ENCODE measurements at regions of chr5 and their contacts with region 1.

Region 1: DNA sequence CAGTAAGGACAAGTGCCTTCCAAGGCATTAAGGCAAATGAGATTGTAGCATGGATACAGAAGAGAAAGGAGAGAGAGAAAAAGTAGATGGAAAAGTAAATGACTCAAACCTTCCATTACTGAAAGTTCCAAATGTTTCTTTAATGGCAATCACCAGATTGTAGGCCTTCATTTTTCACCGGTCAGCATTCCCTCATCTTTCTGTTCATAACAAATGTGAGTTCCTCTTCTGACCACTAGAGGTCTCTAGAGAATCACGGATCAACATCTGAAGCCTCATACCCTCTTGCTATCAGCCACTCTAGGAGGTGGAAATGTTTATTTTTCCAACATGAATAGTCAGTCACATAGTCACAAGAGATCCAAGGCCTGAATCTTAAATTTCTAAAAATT is 73.6 kb upstream of the RPS23 start:
- DNase-seq: peak in 1 of 2 donors; percentile 91
- H3K4me3 ChIP-seq: no peak overlapping the region
- H3K27ac ChIP-seq: no peak overlapping the region
- H3K4me1 ChIP-seq: peaks cover 0 to 14% (median 4%) of the 10 kb centered on the region in 4 donors
- H3K27me3 ChIP-seq: no peaks in the 10 kb centered on the region
- CTCF ChIP-seq: peak in 5 of 7 experiments; percentile 69 to 87 (median 76)
- EP300 ChIP-seq: no peak
- POLR2A ChIP-seq: no peak

Region 2: DNA sequence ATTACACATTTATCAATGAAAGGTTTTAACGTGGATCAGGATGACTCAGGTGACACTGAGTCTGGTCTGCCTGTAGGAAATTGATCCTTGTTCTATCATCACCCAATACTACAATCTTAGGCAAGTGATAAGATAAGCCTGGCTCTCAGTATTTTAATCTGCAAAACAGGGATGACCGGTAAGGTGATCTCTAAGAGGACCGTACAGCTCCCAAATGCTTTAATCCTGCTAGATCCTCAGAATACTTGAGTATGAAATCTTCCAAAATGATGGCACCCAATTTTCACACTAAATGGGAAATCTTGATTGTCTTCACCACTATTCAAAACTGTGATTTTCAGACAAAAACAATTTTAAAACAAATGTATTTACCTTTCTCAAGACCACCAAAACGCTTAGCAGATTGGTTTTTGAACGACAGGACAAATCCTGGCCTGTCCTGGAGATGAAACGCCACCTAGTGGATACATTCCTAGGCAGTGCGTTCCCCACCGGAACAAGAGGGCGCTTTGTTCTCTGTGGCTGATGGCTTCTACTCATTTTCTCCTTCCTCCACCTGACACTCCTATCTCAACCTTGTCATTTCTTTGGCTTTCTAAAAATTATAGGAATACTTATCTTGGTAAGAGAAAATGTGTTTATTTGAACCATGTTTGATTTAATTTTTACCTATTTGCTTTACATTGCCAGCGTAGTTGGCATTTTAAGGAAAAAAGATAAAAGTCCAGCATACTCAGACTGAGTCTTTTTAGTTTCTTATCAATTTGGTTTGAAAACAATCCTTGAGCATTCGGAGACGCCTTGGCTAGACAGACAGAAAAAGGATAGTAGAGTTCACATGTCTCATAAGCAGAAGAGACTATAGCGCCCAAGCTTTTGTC is 1078.6 kb after region 1 on chr5:
- intact Hi-C with region 1: loop called (anchors 10 kb)
- DNase-seq: peak; percentile 55 to 86
- H3K4me3 ChIP-seq: no peak overlapping the region
- H3K27ac ChIP-seq: no peak overlapping the region
- H3K4me1 ChIP-seq: peaks cover 0 to 18% (median 1%) of the 10 kb centered on the region in 4 donors
- H3K27me3 ChIP-seq: peaks cover 0 to 10% (median 0%) of the 10 kb centered on the region in 3 donors
- CTCF ChIP-seq: peak in 5 of 7 experiments; percentile 41 to 80 (median 46)
- EP300 ChIP-seq: no peak
- POLR2A ChIP-seq: no peak

Region 3: DNA sequence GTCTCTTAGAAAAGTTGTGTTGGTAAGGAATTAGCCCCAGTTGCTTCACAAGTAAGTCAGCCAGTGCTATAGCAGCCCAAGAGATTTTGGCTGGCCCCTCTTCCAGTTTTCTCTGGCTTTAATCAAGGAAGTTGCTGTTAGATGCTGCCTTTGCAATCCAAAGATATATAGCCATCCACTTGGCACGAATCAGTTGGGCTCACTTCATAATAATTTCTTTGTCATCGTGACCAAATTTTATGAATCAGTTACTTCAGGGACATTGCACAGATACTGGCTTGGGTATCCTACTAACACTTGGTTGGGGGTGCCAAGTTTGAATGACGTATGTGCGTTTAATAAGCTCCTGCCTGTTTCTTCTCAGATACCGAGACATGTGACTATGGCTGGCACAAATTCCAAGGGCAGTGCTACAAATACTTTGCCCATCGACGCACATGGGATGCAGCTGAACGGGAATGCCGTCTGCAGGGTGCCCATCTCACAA is 1201.3 kb after region 1 on chr5:
- intact Hi-C with region 1: loop called (anchors 10 kb)
- DNase-seq: peak in 1 of 2 donors; percentile 41
- H3K4me3 ChIP-seq: no peak overlapping the region
- H3K27ac ChIP-seq: no peak overlapping the region
- H3K4me1 ChIP-seq: peaks cover 0 to 17% (median 5%) of the 10 kb centered on the region in 4 donors
- H3K27me3 ChIP-seq: no peaks in the 10 kb centered on the region
- CTCF ChIP-seq: no peak
- EP300 ChIP-seq: no peak
- POLR2A ChIP-seq: no peak

Measured in stomach (tissue), 19 donors.